ENCODE measurements at regions of chr16 and their contacts with region 1.

Region 1: GRCh38 chr16:30065143-30065850 is at the start of gene ALDOA:
- DNase-seq: peak; percentile 91 to 95 (median 92)
- H3K4me3 ChIP-seq: peak within 1 kb of the TSS; percentile 85
- H3K4me3 Mint-ChIP-seq: peak within 1 kb of the TSS; percentile 92 to 100 (median 99)
- H3K27ac ChIP-seq: peak within 1 kb of the TSS; percentile 91
- H3K27ac Mint-ChIP-seq: peak within 1 kb of the TSS; percentile 92 to 99 (median 97)
- H3K4me1 ChIP-seq: peaks cover 44% of the 10 kb centered on the region
- H3K4me1 Mint-ChIP-seq: peaks cover 32 to 45% (median 35%) of the 10 kb centered on the region in 3 donors
- H3K27me3 ChIP-seq: no peaks in the 10 kb centered on the region
- H3K27me3 Mint-ChIP-seq: peaks cover 0 to 3% of the 10 kb centered on the region in 2 donors
- total RNA-seq, gene ALDOA: 1,907 to 1,909 TPM

Region 2: DNA sequence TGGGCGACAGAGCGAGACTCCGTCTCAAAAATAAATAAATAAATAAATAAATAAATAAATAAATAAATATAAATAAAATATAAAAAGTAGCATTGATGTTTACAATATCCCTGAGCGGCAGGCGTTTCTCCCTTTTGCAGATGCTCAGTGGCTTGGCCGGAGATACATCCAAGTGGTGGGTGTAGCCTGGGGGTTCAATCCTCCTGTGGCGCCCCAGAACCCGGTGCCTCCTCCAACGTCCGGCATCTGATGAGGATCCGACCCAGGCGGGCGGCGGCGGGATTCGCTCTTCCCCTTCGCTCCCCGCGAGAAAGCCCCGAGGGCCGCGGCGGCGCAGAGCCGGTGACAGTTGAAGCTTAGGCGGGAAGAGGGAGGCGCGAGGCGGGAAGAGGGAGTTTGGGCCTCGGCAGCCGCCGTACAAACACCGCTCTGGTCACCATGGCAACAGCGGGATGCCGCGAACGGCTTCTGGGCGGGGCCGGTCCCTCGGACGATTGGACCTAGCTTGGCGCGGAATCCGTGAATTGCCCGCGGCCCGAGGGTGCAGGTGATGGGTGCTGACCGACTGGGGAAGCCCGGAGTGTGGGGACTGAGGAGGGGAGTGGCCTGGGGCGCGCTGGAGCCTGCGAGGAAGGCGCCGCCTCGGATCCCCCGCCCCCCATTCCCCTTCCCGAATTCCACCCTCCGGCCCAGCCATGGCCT is 12.5 kb before region 1 on chr16:
- CTCF ChIA-PET with region 1: interaction called, 8 read pairs
- POLR2A ChIA-PET with region 1: interaction called, 15 read pairs
- DNase-seq: peak; percentile 78 to 91 (median 82)
- H3K4me3 ChIP-seq: peak overlapping the region; percentile 67
- H3K4me3 Mint-ChIP-seq: peak overlapping the region; percentile 83 to 92 (median 87)
- H3K27ac ChIP-seq: peak overlapping the region; percentile 54
- H3K27ac Mint-ChIP-seq: peak overlapping the region in 5 of 8 donors; percentile 32 to 75 (median 63)
- H3K4me1 ChIP-seq: peaks cover 6% of the 10 kb centered on the region
- H3K4me1 Mint-ChIP-seq: peaks cover 0 to 22% (median 12%) of the 10 kb centered on the region in 3 donors
- H3K27me3 ChIP-seq: no peaks in the 10 kb centered on the region
- H3K27me3 Mint-ChIP-seq: no peaks in the 10 kb centered on the region

Region 3: DNA sequence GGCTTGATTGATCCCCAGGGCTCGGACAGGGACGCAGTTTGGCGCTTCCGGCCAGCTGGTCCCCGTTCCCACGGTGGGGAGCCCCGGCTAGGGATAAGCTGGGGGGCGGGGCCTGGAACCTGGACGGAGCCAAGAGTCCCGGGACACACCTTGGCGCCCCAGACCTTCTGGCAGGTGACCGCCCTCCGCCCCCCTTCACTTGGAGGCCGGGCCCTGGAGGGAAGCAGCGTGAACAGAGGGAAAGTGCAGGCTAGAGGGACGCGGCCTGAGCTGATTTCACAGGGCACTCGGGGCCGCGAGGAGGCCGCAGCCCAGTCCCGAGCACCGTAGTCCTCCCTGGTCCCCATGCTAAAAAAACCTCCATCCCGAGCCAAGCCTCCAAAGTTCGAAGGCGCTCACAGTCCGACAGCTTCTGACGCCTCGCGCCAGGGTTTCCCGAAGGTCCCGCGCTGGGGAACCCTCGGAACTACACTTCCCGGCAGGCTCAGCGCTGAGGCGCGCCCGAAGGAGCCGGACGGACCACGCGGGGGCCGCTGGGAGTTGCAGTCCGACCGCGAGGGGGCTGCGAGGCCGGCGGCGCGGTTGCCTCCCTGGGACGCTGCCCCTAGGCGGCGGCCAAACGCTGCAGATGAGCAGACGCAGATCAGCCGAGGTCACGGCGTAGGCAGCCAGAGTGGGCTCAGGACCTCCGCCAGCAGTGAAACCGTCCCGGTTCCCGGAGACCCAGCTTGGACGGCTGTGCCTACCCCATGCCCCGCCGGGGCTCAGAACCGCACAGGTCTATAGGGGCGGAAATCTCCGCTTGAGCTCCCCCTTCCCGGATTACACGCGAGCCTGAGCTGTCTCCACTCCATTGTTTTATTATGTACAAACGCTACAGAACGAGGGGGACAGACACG is 26.4 kb after region 1 on chr16 and contains the start of gene TBX6:
- CTCF ChIA-PET with region 1: interaction called, 41 read pairs
- POLR2A ChIA-PET with region 1: interaction called, 89 read pairs
- DNase-seq: peak; percentile 89 to 93 (median 90)
- H3K4me3 ChIP-seq: peak within 1 kb of the TSS; percentile 86
- H3K4me3 Mint-ChIP-seq: peak within 1 kb of the TSS; percentile 82 to 94 (median 90)
- H3K27ac ChIP-seq: peak within 1 kb of the TSS; percentile 90
- H3K27ac Mint-ChIP-seq: peak within 1 kb of the TSS; percentile 82 to 98 (median 97)
- H3K4me1 ChIP-seq: peaks cover 63% of the 10 kb centered on the region
- H3K4me1 Mint-ChIP-seq: peaks cover 38 to 50% (median 41%) of the 10 kb centered on the region in 3 donors
- H3K27me3 ChIP-seq: no peaks in the 10 kb centered on the region
- H3K27me3 Mint-ChIP-seq: no peaks in the 10 kb centered on the region
- total RNA-seq, gene TBX6: 0.71 to 0.83 TPM

Region 4: DNA sequence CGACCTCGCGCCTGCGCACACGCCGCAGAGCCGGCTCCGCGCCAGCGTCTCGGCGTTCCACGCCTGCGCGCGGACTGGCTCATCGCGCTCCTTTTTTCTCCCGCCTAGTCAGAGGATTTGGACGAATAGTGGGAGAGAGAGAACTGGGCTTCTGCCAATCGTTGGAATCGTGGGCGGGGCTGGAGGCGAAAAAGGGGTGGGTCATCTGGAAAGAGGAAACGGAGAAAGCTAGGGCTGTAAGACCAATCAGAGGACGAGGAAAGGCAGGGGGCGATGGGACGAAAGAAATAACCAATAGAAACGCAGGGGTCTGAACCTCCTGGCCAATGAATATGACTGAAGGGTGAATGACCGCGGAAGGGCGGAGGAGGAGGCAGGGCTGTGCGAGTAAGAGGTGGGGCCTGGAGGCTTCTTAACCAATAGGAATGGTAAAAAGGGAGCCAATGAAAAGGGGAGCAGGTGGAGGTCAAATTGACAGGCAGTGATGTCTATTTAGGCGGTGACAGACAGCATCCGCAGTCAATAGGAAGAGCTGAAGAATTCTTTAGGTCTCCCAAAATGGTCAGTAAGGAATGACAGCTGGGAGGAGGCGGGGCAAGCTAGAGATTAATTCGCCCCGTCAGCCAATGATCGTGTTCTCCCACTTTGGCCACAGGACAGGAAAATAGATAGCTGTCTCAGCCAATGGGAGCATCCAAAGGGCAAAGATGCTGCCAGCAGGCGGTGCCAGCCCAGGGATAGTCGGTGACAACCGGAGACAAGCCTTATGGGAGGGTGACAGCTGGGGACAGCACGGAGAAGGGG is 305.3 kb after region 1 on chr16 and contains the start of gene TBC1D10B:
- CTCF ChIA-PET with region 1: no interaction called
- POLR2A ChIA-PET with region 1: interaction called, 14 read pairs
- DNase-seq: peak; percentile 96 to 100 (median 100)
- H3K4me3 ChIP-seq: peak within 1 kb of the TSS; percentile 88
- H3K4me3 Mint-ChIP-seq: peak within 1 kb of the TSS; percentile 83 to 91 (median 89)
- H3K27ac ChIP-seq: peak within 1 kb of the TSS; percentile 74
- H3K27ac Mint-ChIP-seq: peak within 1 kb of the TSS; percentile 67 to 97 (median 94)
- H3K4me1 ChIP-seq: peaks cover 36% of the 10 kb centered on the region
- H3K4me1 Mint-ChIP-seq: peaks cover 43 to 56% (median 47%) of the 10 kb centered on the region in 3 donors
- H3K27me3 ChIP-seq: no peaks in the 10 kb centered on the region
- H3K27me3 Mint-ChIP-seq: peaks cover 0 to 2% of the 10 kb centered on the region in 2 donors
- total RNA-seq, gene TBC1D10B: 59.0 to 61.4 TPM

Region 5: DNA sequence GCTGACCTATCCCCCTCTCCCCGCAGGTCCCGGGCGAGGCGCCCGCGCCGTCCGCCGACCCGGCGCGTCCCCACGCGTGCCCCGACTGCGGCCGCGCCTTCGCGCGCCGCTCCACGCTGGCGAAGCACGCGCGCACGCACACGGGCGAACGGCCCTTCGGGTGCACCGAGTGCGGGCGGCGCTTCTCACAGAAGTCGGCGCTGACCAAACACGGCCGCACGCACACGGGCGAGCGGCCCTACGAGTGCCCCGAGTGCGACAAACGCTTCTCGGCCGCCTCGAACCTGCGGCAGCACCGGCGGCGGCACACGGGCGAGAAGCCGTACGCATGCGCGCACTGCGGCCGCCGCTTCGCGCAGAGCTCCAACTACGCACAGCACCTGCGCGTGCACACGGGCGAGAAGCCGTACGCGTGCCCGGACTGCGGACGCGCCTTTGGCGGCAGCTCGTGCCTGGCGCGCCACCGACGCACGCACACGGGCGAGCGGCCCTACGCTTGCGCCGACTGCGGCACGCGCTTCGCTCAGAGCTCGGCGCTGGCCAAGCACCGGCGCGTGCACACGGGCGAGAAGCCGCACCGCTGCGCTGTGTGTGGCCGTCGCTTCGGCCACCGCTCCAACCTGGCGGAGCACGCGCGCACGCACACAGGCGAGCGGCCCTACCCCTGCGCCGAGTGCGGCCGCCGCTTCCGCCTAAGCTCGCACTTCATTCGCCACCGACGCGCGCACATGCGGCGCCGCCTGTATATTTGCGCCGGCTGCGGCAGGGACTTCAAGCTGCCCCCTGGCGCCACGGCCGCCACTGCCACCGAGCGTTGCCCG is 352.4 kb after region 1 on chr16:
- CTCF ChIA-PET with region 1: no interaction called
- POLR2A ChIA-PET with region 1: interaction called, 11 read pairs
- DNase-seq: peak; percentile 80 to 93 (median 89)
- H3K4me3 ChIP-seq: peak overlapping the region; percentile 68
- H3K4me3 Mint-ChIP-seq: peak overlapping the region; percentile 58 to 86 (median 71)
- H3K27ac ChIP-seq: peak overlapping the region; percentile 65
- H3K27ac Mint-ChIP-seq: peak overlapping the region in 4 of 8 donors; percentile 68 to 88 (median 75)
- H3K4me1 ChIP-seq: peaks cover 11% of the 10 kb centered on the region
- H3K4me1 Mint-ChIP-seq: peaks cover 14 to 16% (median 14%) of the 10 kb centered on the region in 3 donors
- H3K27me3 ChIP-seq: no peaks in the 10 kb centered on the region
- H3K27me3 Mint-ChIP-seq: peaks cover 0 to 1% of the 10 kb centered on the region in 2 donors